GM12878 (cell line): ENCODE measurements at regions of chr5 and their contacts with region 1.

Region 1: DNA sequence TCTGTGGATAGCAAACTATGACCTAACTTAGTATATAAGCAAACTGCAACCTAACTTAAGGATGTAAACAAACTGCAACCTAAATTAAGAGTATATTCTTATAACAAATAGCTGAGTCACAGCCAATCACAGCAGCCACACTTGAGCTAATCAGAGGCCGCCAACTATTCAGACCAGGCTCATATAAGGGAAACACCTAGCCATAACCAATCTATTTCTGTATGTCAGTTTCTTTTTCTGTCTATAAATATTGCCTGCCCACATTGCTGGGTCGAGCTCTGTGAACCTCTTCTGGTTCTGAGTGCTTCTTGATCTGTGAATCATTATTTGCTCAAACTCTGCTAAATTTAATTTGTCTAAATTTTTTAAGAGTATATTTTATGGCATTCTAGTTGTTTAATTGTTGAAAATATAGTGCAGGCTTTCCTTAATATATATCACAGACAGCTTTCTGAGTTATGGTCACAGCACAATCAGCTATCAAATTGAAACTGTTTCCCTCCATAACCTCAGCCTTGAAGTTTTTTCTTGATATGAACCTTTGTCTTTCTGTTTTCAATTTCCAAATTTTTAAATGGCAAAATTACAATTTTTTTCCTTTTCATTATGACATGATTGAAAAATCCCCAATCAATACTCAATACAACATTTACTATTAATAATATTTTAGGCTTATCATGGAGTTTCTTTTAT is 327.1 kb upstream of the NUDT12 start:
- DNase-seq: peak; percentile 9
- ATAC-seq: peak; percentile 98
- H3K4me3 ChIP-seq: no peak overlapping the region
- H3K27ac ChIP-seq: no peak overlapping the region
- H3K4me1 ChIP-seq: no peaks in the 10 kb centered on the region
- H3K27me3 ChIP-seq: no peaks in the 10 kb centered on the region
- CTCF ChIP-seq: no peak
- EP300 ChIP-seq: no peak
- POLR2A ChIP-seq: no peak
- RAD21 ChIP-seq: no peak

Region 2: GRCh38 chr5:103929338-103930003 is 39.8 kb after region 1 on chr5:
- CTCF ChIA-PET with region 1: interaction called, 5 read pairs
- POLR2A ChIA-PET with region 1: interaction called, 4 read pairs
- RAD21 ChIA-PET with region 1: interaction called, 6 read pairs
- SMC1A ChIA-PET with region 1: interaction called, 34 read pairs
- in situ Hi-C with region 1: no loop called
- intact Hi-C with region 1: no loop called
- DNase-seq: no peak
- ATAC-seq: peak; percentile 97
- H3K4me3 ChIP-seq: no peak overlapping the region
- H3K27ac ChIP-seq: no peak overlapping the region
- H3K4me1 ChIP-seq: no peaks in the 10 kb centered on the region
- H3K27me3 ChIP-seq: no peaks in the 10 kb centered on the region
- CTCF ChIP-seq: no peak
- EP300 ChIP-seq: no peak
- POLR2A ChIP-seq: no peak
- RAD21 ChIP-seq: no peak

Region 3: GRCh38 chr5:104024538-104024937 is 134.9 kb after region 1 on chr5:
- CTCF ChIA-PET with region 1: no interaction called
- POLR2A ChIA-PET with region 1: no interaction called
- RAD21 ChIA-PET with region 1: no interaction called
- SMC1A ChIA-PET with region 1: no interaction called
- in situ Hi-C with region 1: no loop called
- intact Hi-C with region 1: no loop called
- DNase-seq: no peak
- ATAC-seq: no peak
- H3K4me3 ChIP-seq: no peak overlapping the region
- H3K27ac ChIP-seq: no peak overlapping the region
- H3K4me1 ChIP-seq: no peaks in the 10 kb centered on the region
- H3K27me3 ChIP-seq: no peaks in the 10 kb centered on the region
- CTCF ChIP-seq: no peak
- EP300 ChIP-seq: no peak
- POLR2A ChIP-seq: no peak
- RAD21 ChIP-seq: no peak

Region 4: DNA sequence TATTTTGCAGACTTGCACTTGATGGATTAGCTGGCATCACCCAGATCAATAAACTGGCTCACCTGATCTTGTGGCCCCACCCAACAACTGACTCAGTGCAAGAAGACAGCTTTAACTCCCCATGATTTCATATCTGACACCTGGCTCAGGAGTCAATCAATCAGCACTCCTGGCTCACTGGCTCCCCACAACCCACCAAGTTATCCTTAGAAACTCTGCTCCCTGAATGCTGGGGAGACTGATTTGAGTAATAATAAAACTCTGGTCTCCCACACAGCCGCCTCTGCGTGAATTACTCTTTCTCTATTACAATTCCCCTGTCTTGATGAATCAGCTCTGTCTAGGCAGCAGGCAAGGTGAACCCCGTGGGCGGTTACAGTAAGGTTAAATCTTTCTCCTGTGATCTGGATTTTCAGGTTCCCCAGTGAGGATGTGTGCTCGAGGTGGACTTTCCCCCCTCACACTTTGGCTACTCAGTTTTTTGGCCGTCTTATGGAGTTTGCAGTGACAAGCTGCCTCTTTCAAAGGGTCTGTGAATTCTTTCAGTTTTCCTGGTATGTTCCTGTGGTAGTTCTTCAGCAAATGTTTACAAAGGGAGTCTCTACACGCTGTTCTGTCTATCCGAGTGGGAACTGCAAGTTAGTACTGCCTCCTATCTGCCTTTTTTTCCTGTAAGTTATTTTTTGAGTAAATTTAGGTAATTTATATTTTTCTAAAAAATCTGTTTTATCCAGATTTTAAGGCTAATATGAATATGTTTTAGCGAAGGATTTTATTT is 173.1 kb after region 1 on chr5:
- CTCF ChIA-PET with region 1: no interaction called
- POLR2A ChIA-PET with region 1: no interaction called
- RAD21 ChIA-PET with region 1: no interaction called
- SMC1A ChIA-PET with region 1: no interaction called
- in situ Hi-C with region 1: no loop called
- intact Hi-C with region 1: no loop called
- DNase-seq: no peak
- ATAC-seq: peak; percentile 46; the same call in 2 of the 3 replicates
- H3K4me3 ChIP-seq: no peak overlapping the region
- H3K27ac ChIP-seq: no peak overlapping the region
- H3K4me1 ChIP-seq: no peaks in the 10 kb centered on the region
- H3K27me3 ChIP-seq: no peaks in the 10 kb centered on the region
- CTCF ChIP-seq: no peak
- EP300 ChIP-seq: no peak
- POLR2A ChIP-seq: no peak
- RAD21 ChIP-seq: no peak

Region 5: GRCh38 chr5:104139840-104140239 is 250.2 kb after region 1 on chr5:
- CTCF ChIA-PET with region 1: no interaction called
- POLR2A ChIA-PET with region 1: no interaction called
- RAD21 ChIA-PET with region 1: no interaction called
- SMC1A ChIA-PET with region 1: no interaction called
- in situ Hi-C with region 1: no loop called
- intact Hi-C with region 1: no loop called
- DNase-seq: no peak
- ATAC-seq: no peak
- H3K4me3 ChIP-seq: no peak overlapping the region
- H3K27ac ChIP-seq: no peak overlapping the region
- H3K4me1 ChIP-seq: no peaks in the 10 kb centered on the region
- H3K27me3 ChIP-seq: no peaks in the 10 kb centered on the region
- CTCF ChIP-seq: no peak
- EP300 ChIP-seq: no peak
- POLR2A ChIP-seq: no peak
- RAD21 ChIP-seq: no peak